ENCODE measurements at regions of chr17 and their contacts with region 1.

Region 1: GRCh38 chr17:44141717-44142285 is at the start of gene HROB:
- DNase-seq: peak; percentile 94 to 99
- ATAC-seq: peak; percentile 74 to 83
- H3K4me3 ChIP-seq: peak within 1 kb of the TSS; percentile 88
- H3K27ac ChIP-seq: peak within 1 kb of the TSS; percentile 83 to 93
- H3K4me1 ChIP-seq: peaks cover 32% of the 10 kb centered on the region
- CTCF ChIP-seq: peak; percentile 92
- EP300 ChIP-seq: no peak
- POLR2A ChIP-seq: no peak
- RAD21 ChIP-seq: peak; percentile 62 to 70
- polyA plus RNA-seq, gene HROB: 5.4 and 5.6 TPM in 2 replicates

Region 2: GRCh38 chr17:44159519-44160210 is 17.9 kb after region 1 on chr17:
- CTCF ChIA-PET with region 1: interaction called, 159 read pairs
- POLR2A ChIA-PET with region 1: interaction called, 4 read pairs
- DNase-seq: no peak
- ATAC-seq: no peak
- H3K4me3 ChIP-seq: no peak overlapping the region
- H3K27ac ChIP-seq: no peak overlapping the region
- H3K4me1 ChIP-seq: no peaks in the 10 kb centered on the region
- CTCF ChIP-seq: no peak
- EP300 ChIP-seq: no peak
- POLR2A ChIP-seq: no peak
- RAD21 ChIP-seq: no peak

Region 3: DNA sequence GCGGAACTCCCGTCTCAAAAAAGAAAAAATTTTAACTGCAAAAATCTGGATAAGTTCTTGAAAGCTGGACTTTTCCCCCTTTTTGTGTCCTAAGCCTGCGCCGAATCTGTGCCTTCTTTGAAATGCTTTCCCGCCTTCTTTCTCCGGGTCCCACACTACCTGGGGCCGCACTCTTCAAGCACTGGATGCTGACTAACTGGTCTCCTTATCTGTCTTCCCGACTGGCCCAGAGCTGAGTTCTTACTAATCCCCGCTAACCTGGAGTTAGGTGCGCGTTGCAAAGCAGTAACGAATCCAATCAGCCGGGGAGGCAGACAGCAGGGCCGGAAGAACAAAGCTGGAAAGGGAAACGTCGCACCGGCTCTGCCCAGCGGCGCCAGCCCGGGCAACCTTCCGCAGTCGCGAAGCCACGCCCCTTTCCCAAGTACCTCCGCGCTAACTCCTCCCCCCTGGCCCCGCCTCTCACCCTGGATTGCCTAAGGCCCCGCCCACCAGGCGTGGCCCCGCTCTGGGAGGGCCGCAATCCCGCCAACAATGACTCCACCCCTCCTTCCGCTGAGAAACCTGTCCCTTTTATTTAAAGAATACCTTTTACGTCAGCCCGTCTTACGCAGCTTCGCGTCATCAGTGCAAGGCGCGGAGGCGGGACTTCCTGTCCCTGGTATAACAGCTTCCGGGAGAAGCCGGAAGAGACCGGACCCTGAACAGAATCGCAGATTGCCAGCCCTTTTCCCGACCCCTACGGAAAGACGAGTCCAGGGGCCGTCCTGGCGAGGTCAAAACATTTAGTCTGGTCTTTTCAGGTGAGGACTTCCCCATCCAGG is 44.7 kb after region 1 on chr17 and contains the start of gene TMUB2:
- CTCF ChIA-PET with region 1: interaction called, 5 read pairs
- POLR2A ChIA-PET with region 1: interaction called, 16 read pairs
- DNase-seq: peak; percentile 100
- ATAC-seq: peak; percentile 85 to 88
- H3K4me3 ChIP-seq: peak within 1 kb of the TSS; percentile 87
- H3K27ac ChIP-seq: peak within 1 kb of the TSS; percentile 92 to 97
- H3K4me1 ChIP-seq: peaks cover 24% of the 10 kb centered on the region
- CTCF ChIP-seq: no peak
- EP300 ChIP-seq: no peak
- POLR2A ChIP-seq: peak; percentile 98
- RAD21 ChIP-seq: no peak
- polyA plus RNA-seq, gene TMUB2: 36.2 and 43.3 TPM in 2 replicates

Region 4: GRCh38 chr17:44400226-44400847 is 258.5 kb after region 1 on chr17:
- CTCF ChIA-PET with region 1: no interaction called
- POLR2A ChIA-PET with region 1: no interaction called
- DNase-seq: peak; percentile 48
- ATAC-seq: peak; percentile 78 to 84; a peak in 5 of 6 replicates
- H3K4me3 ChIP-seq: no peak overlapping the region
- H3K27ac ChIP-seq: no peak overlapping the region
- H3K4me1 ChIP-seq: no peaks in the 10 kb centered on the region
- CTCF ChIP-seq: peak; percentile 75
- EP300 ChIP-seq: no peak
- POLR2A ChIP-seq: no peak
- RAD21 ChIP-seq: peak; percentile 59 to 63

Region 5: GRCh38 chr17:44664867-44665266 is 523.1 kb after region 1 on chr17:
- CTCF ChIA-PET with region 1: no interaction called
- POLR2A ChIA-PET with region 1: no interaction called
- DNase-seq: no peak
- ATAC-seq: no peak
- H3K4me3 ChIP-seq: no peak overlapping the region
- H3K27ac ChIP-seq: no peak overlapping the region
- H3K4me1 ChIP-seq: no peaks in the 10 kb centered on the region
- CTCF ChIP-seq: no peak
- EP300 ChIP-seq: no peak
- POLR2A ChIP-seq: no peak
- RAD21 ChIP-seq: no peak